ENCODE measurements at regions of chr15 and their contacts with region 1.

Region 1: GRCh38 chr15:98904544-98904943 is 103.0 kb downstream of the PGPEP1L start:
- DNase-seq: no peak
- H3K4me3 ChIP-seq: no peak overlapping the region
- H3K27me3 ChIP-seq: no peaks in the 10 kb centered on the region
- CTCF ChIP-seq: peak; percentile 83

Region 2: GRCh38 chr15:98845107-98845884 is 59.2 kb before region 1 on chr15:
- CTCF ChIA-PET with region 1: no interaction called
- POLR2A ChIA-PET with region 1: no interaction called
- DNase-seq: no peak
- H3K4me3 ChIP-seq: no peak overlapping the region
- H3K27me3 ChIP-seq: no peaks in the 10 kb centered on the region
- CTCF ChIP-seq: no peak

Region 3: DNA sequence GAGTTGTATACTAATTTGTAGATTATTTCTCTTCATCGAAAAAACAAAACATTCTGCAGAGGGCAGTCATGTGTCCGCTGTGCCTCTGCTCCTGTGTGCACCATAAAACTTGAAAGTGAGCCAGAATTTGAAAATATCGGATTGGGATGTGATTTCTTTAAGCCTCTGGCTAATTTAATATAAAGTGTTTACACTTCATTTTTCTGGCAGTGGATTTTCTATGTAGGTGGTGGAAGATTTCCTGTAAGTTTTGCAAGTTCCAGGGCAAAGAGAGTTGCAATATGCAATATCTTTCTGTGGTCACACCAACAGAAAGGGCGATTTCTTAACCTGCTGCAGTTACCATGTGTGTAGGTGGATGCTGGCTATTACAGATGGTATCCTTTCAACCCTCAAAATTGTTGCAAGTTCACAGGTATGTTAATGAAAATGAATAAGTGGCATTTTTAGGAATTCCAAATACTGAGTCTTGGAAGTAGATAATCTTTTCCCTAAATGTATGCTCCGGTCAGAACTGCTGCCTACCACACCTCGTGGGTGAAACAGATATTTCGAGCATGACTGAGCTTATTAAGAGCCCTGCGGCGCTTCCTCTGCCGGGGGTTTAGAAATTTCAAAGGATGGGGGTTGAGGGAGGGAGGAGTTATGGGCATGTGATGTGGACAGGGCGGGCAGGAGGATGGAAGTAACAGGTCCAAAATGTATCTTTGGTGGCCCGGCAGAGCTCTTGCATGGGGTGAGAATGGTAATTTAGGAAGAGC is 30.9 kb before region 1 on chr15:
- CTCF ChIA-PET with region 1: interaction called, 10 read pairs
- POLR2A ChIA-PET with region 1: interaction called, 13 read pairs
- DNase-seq: peak; percentile 76
- H3K4me3 ChIP-seq: no peak overlapping the region
- H3K27me3 ChIP-seq: no peaks in the 10 kb centered on the region
- CTCF ChIP-seq: no peak

Region 4: DNA sequence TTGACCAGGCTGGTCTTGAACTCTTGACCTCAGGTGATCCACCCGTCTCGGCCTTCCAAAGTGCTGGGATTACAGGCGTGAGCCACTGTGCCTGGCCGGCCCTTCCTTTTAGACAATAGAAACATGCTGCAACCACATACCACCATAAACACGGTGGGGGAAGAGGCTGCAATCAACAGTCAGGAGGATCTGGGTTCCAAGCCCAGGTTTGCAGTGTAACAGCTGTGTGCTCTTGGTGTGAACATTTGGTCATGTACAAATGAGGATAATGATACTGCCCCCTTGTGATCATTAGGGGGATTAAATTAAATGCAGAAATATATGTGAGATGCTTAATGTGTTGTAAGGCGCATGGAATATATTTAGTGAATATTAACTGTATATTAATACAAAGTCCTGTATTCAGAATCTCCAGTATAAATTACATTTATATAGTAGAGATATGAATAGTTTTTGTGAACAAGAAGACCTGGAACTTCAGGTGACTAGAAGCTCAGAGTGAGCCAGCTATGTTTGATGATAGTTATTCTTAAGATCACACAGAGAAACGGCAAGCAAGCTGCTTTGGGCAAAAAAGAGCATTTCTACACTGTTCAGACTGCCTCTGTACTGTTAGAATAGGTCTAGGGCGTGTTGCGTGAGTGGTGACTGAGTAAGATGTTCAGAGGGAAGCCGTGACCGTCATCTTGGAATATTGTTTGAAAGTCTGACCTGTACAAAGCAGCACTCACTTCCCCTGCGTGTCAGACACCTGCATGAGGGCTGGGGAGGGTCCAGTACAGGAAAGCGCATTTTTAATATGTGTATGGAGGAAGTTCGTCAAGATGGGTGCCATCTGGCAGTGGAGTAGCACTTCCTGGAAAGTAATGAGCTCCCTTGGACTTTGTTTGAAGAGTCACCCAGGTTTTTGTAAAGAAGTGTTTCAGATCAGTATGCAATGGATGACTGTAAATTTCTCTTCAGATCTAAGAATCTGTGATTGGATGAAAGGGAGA is 22.7 kb before region 1 on chr15:
- CTCF ChIA-PET with region 1: interaction called, 12 read pairs
- POLR2A ChIA-PET with region 1: no interaction called
- DNase-seq: no peak
- H3K4me3 ChIP-seq: no peak overlapping the region
- H3K27me3 ChIP-seq: no peaks in the 10 kb centered on the region
- CTCF ChIP-seq: peak; percentile 37; the same call in 1 of the 2 replicates

Measured in BJ (cell line).